ENCODE measurements at regions of chr6 and their contacts with region 1.

Region 1: GRCh38 chr6:88982720-88983119 is 19.3 kb upstream of the RNGTT start:
- DNase-seq: peak; percentile 79
- ATAC-seq: peak; percentile 93
- H3K4me3 ChIP-seq: no peak overlapping the region
- H3K27ac ChIP-seq: no peak overlapping the region
- H3K4me1 ChIP-seq: no peaks in the 10 kb centered on the region
- H3K27me3 ChIP-seq: peaks cover 3% of the 10 kb centered on the region; the same call in 1 of the 2 replicates
- CTCF ChIP-seq: peak; percentile 92
- POLR2A ChIP-seq: no peak
- RAD21 ChIP-seq: peak; percentile 88

Region 2: DNA sequence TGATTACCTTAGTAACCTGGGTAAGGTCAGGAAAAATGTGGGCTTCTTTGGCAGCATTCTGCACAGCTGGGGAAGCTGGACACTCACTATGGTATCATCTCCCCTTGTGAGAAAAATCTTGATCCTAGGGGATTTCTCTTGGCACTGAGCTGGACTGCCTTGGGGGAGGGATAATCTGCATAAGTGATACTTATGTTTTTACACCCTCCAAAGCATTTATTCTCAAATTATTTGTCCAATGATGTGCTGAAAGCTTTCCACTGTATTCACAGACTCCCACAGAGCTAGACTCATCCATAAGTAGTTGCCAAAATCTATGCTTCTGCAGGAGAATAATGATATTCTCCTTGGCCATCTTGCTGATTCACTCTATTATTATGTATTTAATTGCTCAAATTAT is 695.0 kb before region 1 on chr6:
- CTCF ChIA-PET with region 1: no interaction called
- POLR2A ChIA-PET with region 1: no interaction called
- dilution Hi-C with region 1: no loop called
- in situ Hi-C with region 1: no loop called
- intact Hi-C with region 1: no loop called
- DNase-seq: no peak
- ATAC-seq: no peak
- H3K4me3 ChIP-seq: no peak overlapping the region
- H3K27ac ChIP-seq: no peak overlapping the region
- H3K4me1 ChIP-seq: no peaks in the 10 kb centered on the region
- H3K27me3 ChIP-seq: no peaks in the 10 kb centered on the region
- CTCF ChIP-seq: no peak
- POLR2A ChIP-seq: no peak
- RAD21 ChIP-seq: no peak

Region 3: GRCh38 chr6:89045011-89045387 is 62.3 kb after region 1 on chr6:
- CTCF ChIA-PET with region 1: no interaction called
- POLR2A ChIA-PET with region 1: no interaction called
- dilution Hi-C with region 1: no loop called
- in situ Hi-C with region 1: no loop called
- intact Hi-C with region 1: no loop called
- DNase-seq: no peak
- ATAC-seq: no peak
- H3K4me3 ChIP-seq: no peak overlapping the region
- H3K27ac ChIP-seq: no peak overlapping the region
- H3K4me1 ChIP-seq: peaks cover 4% of the 10 kb centered on the region
- H3K27me3 ChIP-seq: no peaks in the 10 kb centered on the region; the same call in 1 of the 2 replicates
- CTCF ChIP-seq: no peak
- POLR2A ChIP-seq: no peak
- RAD21 ChIP-seq: no peak

Region 4: DNA sequence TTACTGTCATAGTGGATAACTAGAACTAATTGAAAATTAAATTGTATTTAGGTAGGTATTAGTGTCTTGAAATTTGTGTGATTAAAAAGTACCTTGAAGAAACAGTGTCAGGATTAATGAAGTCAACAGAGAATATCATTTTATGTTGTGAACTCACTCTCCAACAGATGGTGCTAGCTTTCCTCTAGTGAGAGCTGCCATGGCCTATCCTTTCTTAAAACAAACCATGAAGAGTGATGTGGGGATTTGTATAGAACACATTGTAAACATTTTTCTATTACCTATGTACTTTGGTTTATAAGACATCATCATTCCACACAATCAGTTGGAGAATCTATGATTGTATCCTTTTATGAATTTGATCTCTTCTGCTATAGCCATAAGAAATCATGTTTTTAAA is 139.9 kb after region 1 on chr6:
- CTCF ChIA-PET with region 1: interaction called, 3 read pairs
- POLR2A ChIA-PET with region 1: no interaction called
- dilution Hi-C with region 1: no loop called
- in situ Hi-C with region 1: no loop called
- intact Hi-C with region 1: loop called (anchors 1 kb)
- DNase-seq: peak; percentile 52
- ATAC-seq: peak; percentile 85
- H3K4me3 ChIP-seq: no peak overlapping the region
- H3K27ac ChIP-seq: no peak overlapping the region
- H3K4me1 ChIP-seq: no peaks in the 10 kb centered on the region
- H3K27me3 ChIP-seq: peaks cover 8% of the 10 kb centered on the region
- CTCF ChIP-seq: peak; percentile 67
- POLR2A ChIP-seq: no peak
- RAD21 ChIP-seq: peak; percentile 78

Region 5: DNA sequence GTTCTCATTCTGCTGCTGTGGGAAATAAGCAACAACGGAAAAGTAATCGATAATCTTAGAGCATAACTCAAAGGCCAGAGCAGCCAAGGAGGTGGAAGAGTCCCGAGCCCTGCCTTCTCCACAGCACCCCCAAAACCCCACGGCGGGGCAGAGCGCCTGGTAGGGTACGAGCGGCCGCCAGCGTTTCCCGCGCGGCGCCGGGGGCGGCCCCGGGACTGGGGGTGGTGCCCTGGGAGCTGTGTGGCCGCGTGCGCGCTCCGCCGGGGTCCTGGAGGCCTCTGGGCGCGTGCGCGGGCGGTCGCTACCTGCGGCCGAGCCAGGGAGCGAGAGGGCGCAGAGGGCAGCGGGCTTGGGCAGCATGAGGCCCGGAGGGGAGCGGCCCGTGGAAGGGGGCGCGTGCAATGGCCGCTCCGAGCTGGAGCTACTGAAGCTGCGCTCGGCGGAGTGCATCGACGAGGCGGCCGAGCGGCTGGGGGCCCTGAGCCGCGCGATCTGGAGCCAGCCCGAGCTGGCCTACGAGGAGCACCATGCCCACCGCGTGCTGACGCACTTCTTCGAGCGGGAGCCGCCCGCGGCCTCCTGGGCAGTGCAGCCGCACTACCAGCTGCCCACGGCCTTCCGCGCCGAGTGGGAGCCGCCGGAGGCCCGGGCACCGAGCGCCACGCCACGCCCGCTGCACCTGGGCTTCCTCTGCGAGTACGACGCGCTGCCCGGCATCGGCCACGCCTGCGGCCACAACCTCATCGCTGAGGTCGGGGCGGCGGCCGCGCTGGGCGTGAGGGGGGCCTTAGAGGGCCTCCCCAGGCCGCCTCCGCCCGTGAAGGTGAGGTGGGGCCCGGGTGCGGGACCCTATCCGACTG is 163.3 kb after region 1 on chr6 and contains the start of gene PM20D2:
- CTCF ChIA-PET with region 1: no interaction called
- POLR2A ChIA-PET with region 1: no interaction called
- dilution Hi-C with region 1: no loop called
- in situ Hi-C with region 1: no loop called
- intact Hi-C with region 1: loop called (anchors 5 kb)
- DNase-seq: peak; percentile 20
- ATAC-seq: peak; percentile 71
- H3K4me3 ChIP-seq: peak within 1 kb of the TSS; percentile 78
- H3K27ac ChIP-seq: peak within 1 kb of the TSS; percentile 37; the same call in 1 of the 2 replicates
- H3K4me1 ChIP-seq: peaks cover 3% of the 10 kb centered on the region; the same call in 1 of the 2 replicates
- H3K27me3 ChIP-seq: no peaks in the 10 kb centered on the region
- CTCF ChIP-seq: no peak
- POLR2A ChIP-seq: no peak
- RAD21 ChIP-seq: no peak
- total RNA-seq, gene PM20D2: 6.5 and 11.4 TPM in 2 replicates

Region 6: DNA sequence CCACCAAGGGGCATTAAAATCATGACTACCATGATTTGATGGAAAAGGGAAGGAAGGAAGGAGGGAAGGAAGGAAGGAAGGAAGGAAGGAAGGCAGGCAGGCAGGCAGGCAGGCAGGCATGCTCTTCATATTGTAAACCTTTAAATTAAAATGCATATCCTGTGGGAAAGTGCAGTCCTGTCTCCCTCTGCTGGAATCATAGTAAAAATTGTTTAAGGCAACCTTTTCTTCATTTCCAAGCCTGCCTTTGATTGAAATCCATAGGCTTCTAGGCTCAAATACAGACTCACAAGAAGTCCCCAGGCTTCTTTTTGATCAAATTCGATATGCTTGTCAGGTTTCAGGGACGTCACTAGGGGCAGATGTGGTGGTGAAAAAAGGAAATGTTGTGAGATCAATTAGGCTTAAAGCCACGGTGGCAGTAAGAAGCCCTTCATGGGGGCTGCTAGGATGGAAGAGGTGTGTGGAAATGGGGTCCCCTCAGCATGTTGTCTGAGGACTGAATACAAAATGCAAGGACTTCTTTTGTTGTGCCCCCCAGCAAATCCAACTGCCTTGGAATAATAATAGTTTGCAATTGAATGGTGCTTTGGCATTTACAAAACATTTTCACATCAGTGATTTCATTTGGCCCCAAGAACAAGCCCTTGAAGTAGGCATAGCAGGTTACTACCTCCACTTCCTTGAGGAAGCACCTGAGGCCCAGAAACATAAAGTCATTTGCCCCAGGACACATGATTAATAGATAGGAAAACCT is 260.0 kb after region 1 on chr6:
- CTCF ChIA-PET with region 1: interaction called, 6 read pairs
- POLR2A ChIA-PET with region 1: no interaction called
- dilution Hi-C with region 1: no loop called
- in situ Hi-C with region 1: loop called (anchors 5 kb)
- intact Hi-C with region 1: loop called (anchors 1 kb)
- DNase-seq: peak; percentile 61
- ATAC-seq: peak; percentile 85
- H3K4me3 ChIP-seq: no peak overlapping the region
- H3K27ac ChIP-seq: no peak overlapping the region
- H3K4me1 ChIP-seq: no peaks in the 10 kb centered on the region
- H3K27me3 ChIP-seq: peaks cover 18% of the 10 kb centered on the region
- CTCF ChIP-seq: peak; percentile 73
- POLR2A ChIP-seq: no peak
- RAD21 ChIP-seq: peak; percentile 82

Region 7: DNA sequence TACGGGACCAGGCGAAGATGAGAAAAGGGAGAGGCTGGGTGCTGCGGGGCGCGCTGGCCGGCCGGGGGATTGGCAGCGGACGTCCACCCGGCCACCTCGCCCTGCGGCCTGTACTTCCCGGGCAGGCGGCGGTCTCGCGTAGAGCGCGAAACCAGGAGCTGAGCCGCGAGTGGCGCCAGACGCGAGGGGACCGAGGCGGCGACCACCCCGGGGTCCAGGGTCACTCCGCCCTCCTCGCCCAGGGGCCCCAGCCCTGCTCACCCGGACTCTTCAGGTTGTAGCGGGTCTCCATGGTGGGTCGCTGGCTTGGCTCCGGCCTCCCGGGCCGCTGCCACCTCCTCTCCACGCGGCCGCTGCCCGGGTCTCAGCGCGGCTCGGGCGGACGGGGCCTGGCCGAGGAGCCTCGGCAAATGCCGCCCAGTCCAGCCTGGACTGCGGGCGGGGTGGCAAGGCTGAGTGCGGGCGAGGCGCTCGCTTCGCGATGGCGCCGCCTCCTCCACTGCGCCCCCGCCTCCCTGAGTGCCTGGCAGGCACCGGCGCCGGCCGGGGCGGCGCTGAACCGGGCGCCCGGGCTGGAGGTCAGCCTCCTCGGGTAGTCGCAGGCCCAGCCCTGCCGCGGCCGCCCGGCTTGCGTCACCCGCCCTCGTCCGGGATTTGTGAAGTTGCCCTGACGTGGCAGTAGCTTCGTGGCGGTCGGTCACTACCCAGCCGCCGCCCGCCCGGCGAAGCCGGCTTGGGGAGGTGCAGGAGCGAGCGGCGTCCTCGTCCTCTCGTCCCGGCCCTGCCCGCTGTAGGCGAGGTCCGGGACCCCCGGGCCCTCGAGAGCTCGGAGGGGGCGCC is 369.8 kb after region 1 on chr6 and contains the start of gene UBE2J1:
- CTCF ChIA-PET with region 1: no interaction called
- POLR2A ChIA-PET with region 1: no interaction called
- dilution Hi-C with region 1: no loop called
- in situ Hi-C with region 1: loop called (anchors 25 kb)
- intact Hi-C with region 1: loop called (anchors 5 kb)
- DNase-seq: peak; percentile 94
- ATAC-seq: peak; percentile 96
- H3K4me3 ChIP-seq: peak within 1 kb of the TSS; percentile 99
- H3K27ac ChIP-seq: peak within 1 kb of the TSS; percentile 85
- H3K4me1 ChIP-seq: peaks cover 9% of the 10 kb centered on the region
- H3K27me3 ChIP-seq: no peaks in the 10 kb centered on the region
- CTCF ChIP-seq: no peak
- POLR2A ChIP-seq: peak; percentile 97
- RAD21 ChIP-seq: no peak
- total RNA-seq, gene UBE2J1: 35.3 and 37.8 TPM in 2 replicates

Region 8: DNA sequence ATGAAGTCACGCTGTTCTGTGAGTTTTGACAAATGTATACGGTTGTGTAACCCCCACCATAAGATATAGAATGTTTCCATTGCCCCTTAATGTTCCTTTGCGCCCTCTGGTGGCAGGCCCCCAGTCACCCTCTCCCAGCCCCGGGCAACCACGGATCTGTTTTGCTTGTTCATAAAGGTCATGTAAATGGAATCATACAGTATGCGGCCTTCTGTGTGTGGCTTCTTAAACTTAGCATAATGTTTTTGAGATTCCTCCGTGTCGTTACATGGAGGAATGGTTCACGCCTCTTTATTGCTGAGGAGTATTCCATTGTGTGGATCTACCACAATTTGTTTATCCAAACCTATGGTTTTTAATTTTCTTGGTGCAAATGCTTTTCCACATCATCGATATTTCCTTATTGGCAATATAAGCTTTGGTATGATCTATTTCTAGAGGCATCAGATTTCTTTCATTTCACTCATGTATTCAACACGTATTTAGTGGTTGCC is 627.5 kb after region 1 on chr6:
- CTCF ChIA-PET with region 1: no interaction called
- POLR2A ChIA-PET with region 1: no interaction called
- dilution Hi-C with region 1: no loop called
- in situ Hi-C with region 1: loop called (anchors 25 kb)
- intact Hi-C with region 1: loop called (anchors 5 kb)
- DNase-seq: peak; percentile 12
- ATAC-seq: peak; percentile 70; the same call in 1 of the 2 replicates
- H3K4me3 ChIP-seq: no peak overlapping the region
- H3K27ac ChIP-seq: no peak overlapping the region
- H3K4me1 ChIP-seq: no peaks in the 10 kb centered on the region
- H3K27me3 ChIP-seq: peaks cover 2% of the 10 kb centered on the region; the same call in 1 of the 2 replicates
- CTCF ChIP-seq: peak; percentile 59
- POLR2A ChIP-seq: no peak
- RAD21 ChIP-seq: peak; percentile 39

Measured in IMR-90 (cell line).